ENCODE measurements at regions of chr15 and their contacts with region 1.

Region 1: DNA sequence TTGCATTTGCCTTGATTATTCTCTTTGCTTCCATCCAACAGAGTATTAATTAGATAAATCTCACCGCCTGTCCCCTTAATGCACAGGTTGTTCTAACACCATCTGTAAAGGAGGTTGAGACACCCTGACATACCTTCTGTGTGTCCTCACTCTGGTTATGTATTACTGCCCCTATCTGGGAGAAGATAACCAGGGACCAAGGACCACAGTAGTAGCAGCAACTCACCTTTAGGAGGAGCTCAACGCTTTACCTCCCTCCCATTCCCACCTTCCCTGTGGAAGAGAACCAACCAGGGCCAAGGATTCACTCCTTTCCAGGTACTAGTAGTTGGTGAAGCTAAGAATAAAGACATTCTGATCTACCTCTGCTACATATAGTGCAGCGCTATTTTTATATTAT is 232.6 kb downstream of the MEX3B start:
- DNase-seq: no peak
- H3K4me3 Mint-ChIP-seq: no peak overlapping the region
- H3K27ac Mint-ChIP-seq: no peak overlapping the region
- H3K4me1 Mint-ChIP-seq: no peaks in the 10 kb centered on the region
- H3K27me3 Mint-ChIP-seq: no peaks in the 10 kb centered on the region
- CTCF ChIP-seq: no peak

Region 2: DNA sequence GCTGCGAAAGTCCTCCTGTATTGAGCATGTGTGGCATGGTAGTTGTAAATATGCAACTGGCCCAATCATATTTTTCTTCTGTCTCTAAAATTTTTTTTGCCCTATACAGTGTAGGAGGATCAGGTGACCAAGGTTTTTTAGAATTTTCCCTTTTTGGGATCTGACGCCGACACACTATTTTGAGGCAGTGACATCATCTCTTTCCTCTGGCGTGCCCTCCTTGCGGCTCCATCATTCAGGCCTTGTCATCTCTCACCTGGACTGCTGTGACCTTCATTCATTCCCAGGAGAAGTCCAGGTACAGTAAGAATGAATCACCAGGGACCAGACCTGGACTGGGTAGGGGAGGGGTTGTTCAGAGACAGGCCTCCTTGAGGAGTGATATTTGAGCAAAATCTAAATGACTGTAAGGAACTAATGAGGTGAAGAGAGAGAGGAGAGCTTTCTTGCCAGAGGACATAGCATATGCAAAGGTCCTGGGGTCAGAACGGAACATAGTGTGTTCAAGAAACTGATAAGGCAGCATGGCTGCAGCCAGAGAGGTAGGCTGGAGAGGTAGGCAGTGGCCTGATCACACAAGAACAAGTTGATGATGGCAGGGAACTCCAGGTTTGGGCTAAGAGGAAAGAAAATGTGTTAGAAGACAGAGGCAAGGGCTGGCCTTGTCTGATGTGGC is 1370.3 kb before region 1 on chr15:
- CTCF ChIA-PET with region 1: interaction called, 10 read pairs
- intact Hi-C with region 1: no loop called
- DNase-seq: no peak
- H3K4me3 Mint-ChIP-seq: no peak overlapping the region
- H3K27ac Mint-ChIP-seq: no peak overlapping the region
- H3K4me1 Mint-ChIP-seq: peaks cover 4% of the 10 kb centered on the region
- H3K27me3 Mint-ChIP-seq: no peaks in the 10 kb centered on the region
- CTCF ChIP-seq: no peak

Region 3: GRCh38 chr15:81897057-81897677 is 84.0 kb after region 1 on chr15:
- CTCF ChIA-PET with region 1: no interaction called
- intact Hi-C with region 1: no loop called
- DNase-seq: no peak
- H3K4me3 Mint-ChIP-seq: no peak overlapping the region
- H3K27ac Mint-ChIP-seq: no peak overlapping the region
- H3K4me1 Mint-ChIP-seq: no peaks in the 10 kb centered on the region
- H3K27me3 Mint-ChIP-seq: no peaks in the 10 kb centered on the region
- CTCF ChIP-seq: no peak

Measured in Calu3 (cell line).